Left ventricle myocardium superior (tissue), 1 donor: ENCODE measurements at regions of chr14 and their contacts with region 1.

Region 1: GRCh38 chr14:50954811-50955372 is 10.6 kb upstream of the PYGL start:
- DNase-seq: no peak
- ATAC-seq: peak; percentile 75

Region 2: DNA sequence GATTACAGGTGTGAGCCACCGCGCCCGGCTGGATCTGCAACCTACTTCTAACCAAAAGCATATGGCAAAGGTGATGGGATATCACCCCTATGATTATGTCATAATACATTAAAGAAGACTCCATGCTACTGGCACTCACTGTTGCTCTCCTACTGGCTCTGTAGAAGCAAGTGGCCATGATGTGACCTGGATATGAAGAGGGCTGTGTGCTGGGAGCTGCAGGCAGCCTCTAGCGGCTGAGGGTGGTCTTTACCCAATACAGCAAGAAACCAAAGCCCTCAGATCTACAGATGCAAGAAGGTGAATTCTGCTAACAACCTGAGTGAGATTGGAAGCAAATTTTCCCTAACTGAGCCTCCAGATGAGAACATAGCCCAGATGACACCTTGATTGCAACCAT is 174.2 kb after region 1 on chr14:
- intact Hi-C with region 1: no loop called
- DNase-seq: no peak
- ATAC-seq: no peak

Region 3: GRCh38 chr14:51219473-51220448 is 264.9 kb after region 1 on chr14:
- intact Hi-C with region 1: loop called (anchors 5 kb)
- DNase-seq: no peak
- ATAC-seq: no peak